Lower leg skin (tissue), 4 donors: ENCODE measurements at regions of chr15 and their contacts with region 1.

Region 1: GRCh38 chr15:83549623-83550022 is 102.5 kb downstream of the SH3GL3 start:
- DNase-seq: no peak
- H3K4me3 ChIP-seq: no peak overlapping the region
- CTCF ChIP-seq: no peak
- POLR2A ChIP-seq: no peak

Region 2: GRCh38 chr15:83475551-83475950 is 74.1 kb before region 1 on chr15:
- intact Hi-C with region 1: loop called (anchors 10 kb)
- DNase-seq: no peak
- H3K4me3 ChIP-seq: no peak overlapping the region
- CTCF ChIP-seq: no peak
- POLR2A ChIP-seq: no peak